ENCODE measurements at regions of chr2 and their contacts with region 1.

Region 1: GRCh38 chr2:215828517-215829184 is 184.7 kb downstream of the MREG start:
- DNase-seq: peak; percentile 50 to 73
- H3K4me3 ChIP-seq: no peak overlapping the region
- H3K27ac ChIP-seq: no peak overlapping the region
- H3K4me1 ChIP-seq: no peaks in the 10 kb centered on the region
- H3K27me3 ChIP-seq: no peaks in the 10 kb centered on the region
- CTCF ChIP-seq: peak; percentile 56 to 89 (median 80)
- EP300 ChIP-seq: no peak
- POLR2A ChIP-seq: no peak
- RAD21 ChIP-seq: peak; percentile 77 to 79

Region 2: DNA sequence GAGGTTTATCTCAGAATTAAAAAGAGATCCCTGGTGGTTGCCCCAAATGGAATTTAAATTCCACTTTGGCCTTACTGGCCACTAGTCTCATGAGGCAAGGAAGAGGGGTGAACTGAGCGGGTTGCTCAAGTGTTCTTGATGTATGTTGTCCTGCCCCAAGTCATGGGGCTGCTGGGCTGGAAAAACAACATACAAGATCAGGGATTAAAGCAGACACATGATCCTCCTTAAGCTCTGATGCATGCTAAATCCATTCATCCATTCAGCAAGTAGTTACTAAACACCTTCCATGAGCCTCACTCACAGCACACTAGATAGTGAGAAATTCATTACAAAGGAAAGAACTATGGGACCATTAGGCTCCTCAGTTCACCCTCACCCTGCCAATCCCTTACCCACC is 11.6 kb before region 1 on chr2:
- CTCF ChIA-PET with region 1: interaction called, 11 read pairs
- POLR2A ChIA-PET with region 1: no interaction called
- DNase-seq: no peak
- H3K4me3 ChIP-seq: no peak overlapping the region
- H3K27ac ChIP-seq: no peak overlapping the region
- H3K4me1 ChIP-seq: no peaks in the 10 kb centered on the region
- H3K27me3 ChIP-seq: no peaks in the 10 kb centered on the region
- CTCF ChIP-seq: no peak
- EP300 ChIP-seq: no peak
- POLR2A ChIP-seq: no peak
- RAD21 ChIP-seq: no peak

Region 3: DNA sequence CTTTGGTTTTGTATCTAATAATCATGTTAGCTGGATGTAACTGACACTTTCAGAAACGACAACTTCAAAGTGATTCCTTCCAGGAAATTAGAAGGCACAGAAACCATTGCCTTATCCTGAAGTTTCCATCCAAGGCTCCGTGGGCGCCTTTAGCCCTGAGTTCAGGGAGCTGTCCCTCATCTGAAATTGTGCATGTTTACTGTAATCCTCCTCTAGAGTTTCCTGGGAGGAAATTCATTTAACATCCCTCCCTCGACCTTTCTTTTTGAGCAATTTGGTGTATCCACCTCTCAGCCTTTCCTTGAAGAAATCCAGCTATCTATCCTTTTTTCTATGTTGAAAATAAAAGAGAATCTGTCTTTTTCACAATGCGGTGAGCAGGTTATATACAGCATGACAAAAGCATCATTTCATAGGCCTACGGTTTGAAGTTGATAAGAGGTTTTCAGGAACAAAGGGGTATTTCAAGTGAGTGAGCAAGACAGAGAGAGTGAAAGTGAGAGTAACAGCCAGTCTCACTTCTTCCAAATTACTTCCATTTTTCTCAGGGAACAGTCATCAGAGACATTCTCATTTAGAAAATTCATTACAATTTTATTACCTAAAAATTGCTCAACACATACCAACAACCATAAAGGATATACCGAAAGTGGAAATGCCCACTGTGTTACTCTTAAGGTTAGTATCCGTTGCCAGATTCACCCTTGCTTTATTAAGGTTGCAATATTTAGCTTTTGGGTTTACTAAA is 17.4 kb after region 1 on chr2:
- CTCF ChIA-PET with region 1: interaction called, 22 read pairs
- POLR2A ChIA-PET with region 1: no interaction called
- DNase-seq: no peak
- H3K4me3 ChIP-seq: no peak overlapping the region
- H3K27ac ChIP-seq: no peak overlapping the region
- H3K4me1 ChIP-seq: no peaks in the 10 kb centered on the region
- H3K27me3 ChIP-seq: no peaks in the 10 kb centered on the region
- CTCF ChIP-seq: no peak
- EP300 ChIP-seq: no peak
- POLR2A ChIP-seq: no peak
- RAD21 ChIP-seq: no peak

Measured in H1 (cell line).